CD4-positive, alpha-beta memory T cell (primary cell): ENCODE measurements at regions of chr6 and their contacts with region 1.

Region 1: GRCh38 chr6:45421709-45422502 is 44.2 kb upstream of the SUPT3H start:
- DNase-seq: peak; percentile 51 to 65 (median 61)
- H3K4me3 ChIP-seq: peak overlapping the region; percentile 66 to 86
- H3K4me3 Mint-ChIP-seq: peak overlapping the region; percentile 96 to 99 (median 98)
- H3K27ac ChIP-seq: peak overlapping the region; percentile 72
- H3K27ac Mint-ChIP-seq: peak overlapping the region; percentile 92 to 98 (median 96)
- H3K4me1 ChIP-seq: peaks cover 35% of the 10 kb centered on the region
- H3K4me1 Mint-ChIP-seq: peaks cover 26 to 58% (median 38%) of the 10 kb centered on the region in 4 donors
- H3K27me3 ChIP-seq: no peaks in the 10 kb centered on the region
- H3K27me3 Mint-ChIP-seq: peaks cover 3 to 5% of the 10 kb centered on the region in 2 donors

Region 2: GRCh38 chr6:44655412-44656342 is 766.2 kb before region 1 on chr6:
- CTCF ChIA-PET with region 1: interaction called, 60 read pairs
- POLR2A ChIA-PET with region 1: interaction called, 10 read pairs
- intact Hi-C with region 1: loop called (anchors 1 kb)
- DNase-seq: peak; percentile 61 to 68 (median 62)
- H3K4me3 ChIP-seq: no peak overlapping the region
- H3K4me3 Mint-ChIP-seq: peak overlapping the region in 7 of 8 donors; percentile 34 to 76 (median 61)
- H3K27ac ChIP-seq: peak overlapping the region; percentile 6
- H3K27ac Mint-ChIP-seq: peak overlapping the region; percentile 30 to 94 (median 85)
- H3K4me1 ChIP-seq: peaks cover 8% of the 10 kb centered on the region
- H3K4me1 Mint-ChIP-seq: peaks cover 5 to 12% (median 6%) of the 10 kb centered on the region in 4 donors
- H3K27me3 ChIP-seq: no peaks in the 10 kb centered on the region
- H3K27me3 Mint-ChIP-seq: peaks cover 0 to 3% of the 10 kb centered on the region in 2 donors

Region 3: GRCh38 chr6:44976719-44977641 is 444.9 kb before region 1 on chr6:
- CTCF ChIA-PET with region 1: no interaction called
- POLR2A ChIA-PET with region 1: interaction called, 3 read pairs
- intact Hi-C with region 1: loop called (anchors 5 kb)
- DNase-seq: peak; percentile 64 to 81 (median 74)
- H3K4me3 ChIP-seq: no peak overlapping the region
- H3K4me3 Mint-ChIP-seq: peak overlapping the region; percentile 47 to 78 (median 68)
- H3K27ac ChIP-seq: no peak overlapping the region
- H3K27ac Mint-ChIP-seq: peak overlapping the region; percentile 54 to 92 (median 81)
- H3K4me1 ChIP-seq: peaks cover 45% of the 10 kb centered on the region
- H3K4me1 Mint-ChIP-seq: peaks cover 24 to 61% (median 40%) of the 10 kb centered on the region in 4 donors
- H3K27me3 ChIP-seq: no peaks in the 10 kb centered on the region
- H3K27me3 Mint-ChIP-seq: no peaks in the 10 kb centered on the region

Region 4: GRCh38 chr6:45436544-45437438 is 14.9 kb after region 1 on chr6:
- CTCF ChIA-PET with region 1: interaction called, 3 read pairs
- POLR2A ChIA-PET with region 1: interaction called, 14 read pairs
- intact Hi-C with region 1: loop called (anchors 1 kb)
- DNase-seq: peak in 4 of 5 donors; percentile 18 to 51 (median 30)
- H3K4me3 ChIP-seq: no peak overlapping the region
- H3K4me3 Mint-ChIP-seq: peak overlapping the region; percentile 12 to 85 (median 63)
- H3K27ac ChIP-seq: peak overlapping the region; percentile 11
- H3K27ac Mint-ChIP-seq: peak overlapping the region; percentile 6 to 89 (median 65)
- H3K4me1 ChIP-seq: peaks cover 97% of the 10 kb centered on the region
- H3K4me1 Mint-ChIP-seq: peaks cover 62 to 92% (median 68%) of the 10 kb centered on the region in 4 donors
- H3K27me3 ChIP-seq: no peaks in the 10 kb centered on the region
- H3K27me3 Mint-ChIP-seq: no peaks in the 10 kb centered on the region

Region 5: GRCh38 chr6:45495429-45496084 is 73.7 kb after region 1 on chr6:
- CTCF ChIA-PET with region 1: interaction called, 4 read pairs
- POLR2A ChIA-PET with region 1: interaction called, 14 read pairs
- intact Hi-C with region 1: no loop called
- DNase-seq: peak; percentile 47 to 69 (median 55)
- H3K4me3 ChIP-seq: no peak overlapping the region
- H3K4me3 Mint-ChIP-seq: peak overlapping the region in 7 of 8 donors; percentile 56 to 86 (median 72)
- H3K27ac ChIP-seq: no peak overlapping the region
- H3K27ac Mint-ChIP-seq: peak overlapping the region; percentile 53 to 93 (median 81)
- H3K4me1 ChIP-seq: peaks cover 46% of the 10 kb centered on the region
- H3K4me1 Mint-ChIP-seq: peaks cover 43 to 68% (median 59%) of the 10 kb centered on the region in 4 donors
- H3K27me3 ChIP-seq: no peaks in the 10 kb centered on the region
- H3K27me3 Mint-ChIP-seq: no peaks in the 10 kb centered on the region

Region 6: DNA sequence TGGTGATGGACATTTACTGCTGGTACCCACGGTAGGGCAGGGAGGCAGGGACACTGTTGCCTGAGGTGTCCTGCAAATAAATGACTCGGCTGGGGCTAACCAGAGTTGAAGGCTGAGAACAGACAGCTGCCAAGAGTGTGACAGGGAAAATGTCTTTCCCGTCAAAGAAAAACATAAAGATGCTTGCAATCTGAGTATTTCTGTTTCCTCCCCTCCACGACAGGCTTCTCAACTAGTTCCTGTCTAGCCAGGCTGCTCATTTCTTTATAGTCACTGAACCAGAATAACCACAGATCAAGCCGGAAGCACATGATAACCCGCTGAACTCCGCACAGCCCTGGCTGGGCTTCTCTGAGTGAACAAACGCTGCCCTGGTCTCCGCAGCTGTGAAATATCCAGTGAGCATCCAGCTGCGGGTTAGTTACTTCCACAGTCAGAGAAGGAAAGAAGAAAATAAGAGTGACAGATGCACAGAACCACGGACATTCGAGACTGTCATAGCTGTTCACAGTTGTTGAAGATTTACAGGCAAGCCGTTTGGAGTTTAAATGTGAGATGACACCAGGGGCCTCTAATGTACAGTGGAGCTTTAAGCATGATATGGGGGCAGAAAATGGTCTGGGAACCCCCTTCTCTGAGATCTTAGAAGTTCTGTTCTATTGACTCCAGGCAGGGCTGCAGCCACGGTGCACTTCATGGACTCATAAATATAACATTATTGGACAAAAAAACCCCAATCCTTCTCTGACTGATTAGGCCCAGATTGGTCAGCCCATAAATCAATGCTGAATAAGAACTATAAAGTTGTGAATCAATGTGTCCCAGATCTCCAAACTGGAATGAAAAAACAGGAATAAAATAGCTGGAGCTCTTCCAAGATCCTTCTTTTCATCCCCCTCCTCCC is 255.7 kb after region 1 on chr6:
- CTCF ChIA-PET with region 1: no interaction called
- POLR2A ChIA-PET with region 1: interaction called, 12 read pairs
- intact Hi-C with region 1: no loop called
- DNase-seq: peak; percentile 52 to 68 (median 58)
- H3K4me3 ChIP-seq: peak overlapping the region in 1 of 2 donors; percentile 27
- H3K4me3 Mint-ChIP-seq: peak overlapping the region; percentile 72 to 86 (median 79)
- H3K27ac ChIP-seq: peak overlapping the region; percentile 3
- H3K27ac Mint-ChIP-seq: peak overlapping the region; percentile 9 to 81 (median 73)
- H3K4me1 ChIP-seq: peaks cover 34% of the 10 kb centered on the region
- H3K4me1 Mint-ChIP-seq: peaks cover 25 to 53% (median 32%) of the 10 kb centered on the region in 4 donors
- H3K27me3 ChIP-seq: no peaks in the 10 kb centered on the region
- H3K27me3 Mint-ChIP-seq: no peaks in the 10 kb centered on the region